ENCODE measurements at regions of chr6 and their contacts with region 1.

Region 1: DNA sequence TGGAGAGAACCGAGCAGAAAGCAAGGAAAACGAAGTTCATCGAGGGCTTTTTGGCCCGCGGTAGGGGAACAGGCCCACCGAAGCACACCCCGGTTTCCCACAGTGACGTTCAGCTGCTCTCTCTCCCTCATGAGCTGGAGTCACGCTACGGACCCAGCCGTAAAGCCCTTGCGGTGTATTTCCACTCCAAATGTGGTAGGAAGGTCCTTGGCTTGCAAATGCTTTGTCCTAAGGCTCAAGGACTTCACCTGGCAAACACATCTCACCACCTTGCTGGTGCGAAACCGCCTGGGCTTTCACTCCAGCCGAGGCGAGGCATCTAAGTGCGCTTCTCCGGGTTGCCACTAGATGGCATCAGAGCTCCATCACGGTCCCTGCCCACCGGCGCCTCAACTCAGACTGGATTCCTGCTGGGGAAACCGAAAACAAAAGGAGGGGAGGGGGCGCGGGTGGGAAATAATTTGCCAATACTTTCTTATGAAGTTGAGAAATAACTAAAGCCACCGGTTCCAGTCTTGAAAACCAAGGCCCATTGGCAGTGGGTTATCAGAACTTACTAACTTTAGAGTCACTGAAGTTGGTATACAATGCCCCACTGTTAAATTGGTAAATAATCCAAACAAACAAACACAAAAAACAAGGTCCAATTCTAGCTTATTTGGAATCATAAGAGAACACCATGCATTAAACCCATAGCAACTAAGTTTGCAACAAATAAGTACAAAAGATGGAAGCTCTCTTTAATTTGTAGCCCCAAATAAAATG is 13.4 kb upstream of the FOXC1 start:
- DNase-seq: peak; percentile 55
- H3K4me3 ChIP-seq: no peak overlapping the region
- H3K27ac ChIP-seq: no peak overlapping the region
- H3K4me1 ChIP-seq: peaks cover 0 to 12% (median 7%) of the 10 kb centered on the region in 4 donors
- H3K27me3 ChIP-seq: peaks cover 82% of the 10 kb centered on the region
- CTCF ChIP-seq: peak; percentile 88 to 95 (median 93)
- EP300 ChIP-seq: no peak
- POLR2A ChIP-seq: no peak

Region 2: GRCh38 chr6:1562171-1562955 is 33.9 kb before region 1 on chr6:
- in situ Hi-C with region 1: no loop called
- intact Hi-C with region 1: no loop called
- DNase-seq: no peak
- H3K4me3 ChIP-seq: no peak overlapping the region
- H3K27ac ChIP-seq: no peak overlapping the region
- H3K4me1 ChIP-seq: no peaks in the 10 kb centered on the region
- H3K27me3 ChIP-seq: no peaks in the 10 kb centered on the region
- CTCF ChIP-seq: no peak
- EP300 ChIP-seq: no peak
- POLR2A ChIP-seq: no peak

Region 3: GRCh38 chr6:2196079-2196679 is 599.9 kb after region 1 on chr6:
- in situ Hi-C with region 1: loop called in 1 of 4 experiments (anchors 10 kb)
- intact Hi-C with region 1: loop called (anchors 5 kb)
- DNase-seq: peak; percentile 21
- H3K4me3 ChIP-seq: no peak overlapping the region
- H3K27ac ChIP-seq: no peak overlapping the region
- H3K4me1 ChIP-seq: peaks cover 0 to 15% (median 4%) of the 10 kb centered on the region in 4 donors
- H3K27me3 ChIP-seq: no peaks in the 10 kb centered on the region
- CTCF ChIP-seq: peak; percentile 71 to 80 (median 76)
- EP300 ChIP-seq: no peak
- POLR2A ChIP-seq: no peak

Region 4: DNA sequence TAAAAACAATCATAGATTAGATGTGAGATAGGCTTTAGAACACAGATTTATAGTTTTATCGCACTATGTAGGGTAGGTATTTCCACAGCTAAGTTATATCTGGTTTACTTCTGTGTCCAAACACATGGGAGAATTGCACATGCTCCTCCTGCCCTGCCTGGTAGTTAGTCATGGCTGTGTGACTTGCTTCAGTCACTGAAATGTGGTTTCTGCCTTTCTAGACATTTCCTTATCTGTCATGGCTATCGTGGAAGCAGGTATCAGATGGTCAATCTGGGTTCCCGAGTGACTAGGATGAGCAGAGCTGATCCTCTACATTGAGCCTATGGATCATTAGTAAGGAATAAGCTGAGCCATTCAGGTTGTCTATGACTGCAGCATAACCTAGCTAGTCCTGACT is 766.9 kb after region 1 on chr6:
- in situ Hi-C with region 1: loop called in 3 of 4 experiments (anchors 10 kb)
- intact Hi-C with region 1: loop called (anchors 1 kb)
- DNase-seq: no peak
- H3K4me3 ChIP-seq: no peak overlapping the region
- H3K27ac ChIP-seq: no peak overlapping the region
- H3K4me1 ChIP-seq: no peaks in the 10 kb centered on the region
- H3K27me3 ChIP-seq: no peaks in the 10 kb centered on the region
- CTCF ChIP-seq: no peak
- EP300 ChIP-seq: no peak
- POLR2A ChIP-seq: no peak

Region 5: DNA sequence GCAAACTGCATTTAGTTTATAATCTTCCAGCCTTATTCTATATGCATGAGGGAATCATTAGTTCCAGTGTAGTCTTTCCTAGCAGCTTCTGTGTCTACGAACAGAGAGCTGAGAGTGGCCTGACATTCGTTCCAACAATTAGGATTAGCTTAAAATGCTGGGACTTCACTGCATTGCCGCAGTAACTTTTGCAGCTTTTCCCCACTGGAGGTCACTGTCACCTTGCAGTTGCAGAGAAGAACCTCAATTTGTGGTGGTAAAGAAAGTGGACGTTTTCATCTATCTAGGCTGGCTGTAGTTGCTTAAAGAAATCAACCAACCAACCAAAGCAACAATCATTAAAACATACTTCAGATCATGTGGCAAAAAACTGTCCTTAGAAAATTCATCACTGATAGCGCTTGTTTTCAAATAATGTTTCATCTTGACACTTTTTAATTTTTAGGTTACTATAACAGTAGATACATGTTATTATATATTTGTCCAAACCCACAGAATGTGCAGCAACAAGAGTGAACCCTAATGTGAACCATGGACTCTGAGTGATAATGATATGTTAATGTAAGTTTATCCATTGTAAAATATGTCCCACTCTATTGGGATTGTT is 1142.2 kb after region 1 on chr6:
- in situ Hi-C with region 1: loop called in 1 of 4 experiments (anchors 25 kb)
- intact Hi-C with region 1: loop called (anchors 10 kb)
- DNase-seq: peak; percentile 25
- H3K4me3 ChIP-seq: no peak overlapping the region
- H3K27ac ChIP-seq: no peak overlapping the region
- H3K4me1 ChIP-seq: no peaks in the 10 kb centered on the region
- H3K27me3 ChIP-seq: no peaks in the 10 kb centered on the region
- CTCF ChIP-seq: peak; percentile 37 to 54 (median 42)
- EP300 ChIP-seq: no peak
- POLR2A ChIP-seq: no peak

Measured in transverse colon (tissue), 4 donors.